ENCODE measurements at regions of chr6 and their contacts with region 1.

Region 1: DNA sequence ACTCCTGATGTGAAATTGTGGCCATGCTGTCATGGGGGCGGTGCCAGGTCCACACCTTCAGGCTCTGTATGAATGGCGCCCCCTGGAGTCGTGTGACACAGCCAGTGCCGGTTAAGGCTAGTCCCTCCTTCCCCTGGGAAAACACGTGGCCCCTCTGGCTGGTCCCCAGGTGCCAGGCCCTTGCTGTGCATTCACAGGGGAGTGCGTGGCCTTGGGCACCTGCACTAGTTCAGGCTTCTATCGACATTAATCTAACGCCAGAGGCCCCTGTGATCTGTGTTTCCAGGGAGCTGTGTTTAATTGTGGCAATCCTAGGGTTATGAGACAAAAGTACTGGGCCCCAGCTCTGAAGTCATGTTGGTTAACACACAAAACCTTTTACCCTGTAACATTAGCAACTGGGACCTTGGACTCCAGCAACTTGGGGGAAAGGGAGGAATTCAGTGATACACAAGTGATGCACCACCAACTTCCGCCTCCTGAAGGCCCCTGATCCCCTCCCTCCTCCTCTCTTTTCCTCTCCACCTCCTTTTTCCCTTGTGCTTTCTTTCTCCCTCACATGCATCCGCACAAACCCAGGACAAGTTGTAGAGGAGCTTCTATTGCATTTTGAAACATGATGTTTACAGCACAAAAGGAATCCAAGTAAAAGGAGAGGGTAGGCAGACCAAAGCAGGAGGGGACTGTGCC is 74.0 kb downstream of the SSR1 start:
- DNase-seq: peak; percentile 83 to 94 (median 91)
- ATAC-seq: peak; percentile 79 to 89 (median 88)
- H3K4me3 ChIP-seq: no peak overlapping the region
- H3K27ac ChIP-seq: peak overlapping the region in 6 of 12 donors; percentile 10 to 59 (median 46)
- H3K4me1 ChIP-seq: peaks cover 0 to 53% (median 29%) of the 10 kb centered on the region in 12 donors
- H3K27me3 ChIP-seq: no peaks in the 10 kb centered on the region
- CTCF ChIP-seq: peak in 11 of 12 donors; percentile 50 to 77 (median 70)
- POLR2A ChIP-seq: no peak

Region 2: GRCh38 chr6:6676910-6677441 is 562.1 kb before region 1 on chr6:
- intact Hi-C with region 1: loop called in 9 of 10 experiments (anchors 2 to 5 kb)
- DNase-seq: peak in 4 of 5 donors; percentile 63 to 75 (median 72)
- ATAC-seq: peak; percentile 73 to 87 (median 86)
- H3K4me3 ChIP-seq: no peak overlapping the region
- H3K27ac ChIP-seq: peak overlapping the region in 11 of 12 donors; percentile 15 to 77 (median 58)
- H3K4me1 ChIP-seq: peaks cover 0 to 45% (median 11%) of the 10 kb centered on the region in 12 donors
- H3K27me3 ChIP-seq: no peaks in the 10 kb centered on the region
- CTCF ChIP-seq: peak; percentile 95 to 99 (median 98)
- POLR2A ChIP-seq: no peak

Region 3: GRCh38 chr6:6890400-6890858 is 348.6 kb before region 1 on chr6:
- intact Hi-C with region 1: loop called in 1 of 10 experiments (anchors 10 kb)
- DNase-seq: peak; percentile 38 to 76 (median 63)
- ATAC-seq: peak in 3 of 4 donors; percentile 46 to 56 (median 55)
- H3K4me3 ChIP-seq: peak overlapping the region in 1 of 12 donors; percentile 23
- H3K27ac ChIP-seq: peak overlapping the region in 9 of 12 donors; percentile 34 to 87 (median 74)
- H3K4me1 ChIP-seq: peaks cover 0 to 43% (median 19%) of the 10 kb centered on the region in 12 donors
- H3K27me3 ChIP-seq: no peaks in the 10 kb centered on the region
- CTCF ChIP-seq: no peak
- POLR2A ChIP-seq: no peak

Region 4: DNA sequence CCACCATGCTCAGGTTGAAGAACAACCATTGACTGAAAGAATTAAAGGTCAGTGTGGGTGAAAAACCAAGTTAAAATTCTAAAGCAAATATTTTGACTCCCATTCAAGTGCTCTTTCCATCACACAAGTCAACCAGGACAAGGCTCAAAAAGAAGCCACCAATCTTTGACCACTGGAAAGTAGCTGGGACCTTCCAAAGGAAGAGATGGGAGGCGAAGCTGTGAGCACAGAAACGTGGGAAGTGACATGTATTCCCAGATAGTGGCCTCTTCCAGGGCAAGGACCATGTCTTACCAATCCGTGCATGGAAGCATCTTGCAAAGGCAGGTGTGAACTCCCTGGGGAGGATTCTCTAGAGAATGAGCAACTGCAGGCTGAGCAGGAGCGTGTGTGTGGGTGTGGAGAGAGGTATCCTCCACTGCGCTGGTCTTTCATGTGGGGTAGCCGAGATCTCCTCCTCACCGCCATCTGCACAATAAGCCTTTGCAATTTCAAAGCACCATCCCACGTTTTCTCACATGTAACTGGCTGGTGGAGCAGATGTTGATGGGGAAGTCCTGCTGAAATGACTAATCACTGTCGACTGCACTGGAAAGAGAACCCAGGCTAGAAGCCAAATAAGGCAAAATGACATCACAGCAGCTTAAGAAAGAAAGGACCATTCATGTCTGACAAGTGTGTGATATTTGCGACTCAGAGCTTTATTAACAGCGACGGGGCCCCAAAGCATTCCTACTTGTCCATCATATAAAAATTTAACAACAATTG is 320.6 kb before region 1 on chr6:
- intact Hi-C with region 1: loop called in 3 of 10 experiments (anchors 10 kb)
- DNase-seq: no peak
- ATAC-seq: peak in 3 of 4 donors; percentile 21 to 45 (median 21)
- H3K4me3 ChIP-seq: no peak overlapping the region
- H3K27ac ChIP-seq: no peak overlapping the region
- H3K4me1 ChIP-seq: peaks cover 0 to 30% (median 15%) of the 10 kb centered on the region in 12 donors
- H3K27me3 ChIP-seq: no peaks in the 10 kb centered on the region
- CTCF ChIP-seq: no peak
- POLR2A ChIP-seq: no peak

Region 5: DNA sequence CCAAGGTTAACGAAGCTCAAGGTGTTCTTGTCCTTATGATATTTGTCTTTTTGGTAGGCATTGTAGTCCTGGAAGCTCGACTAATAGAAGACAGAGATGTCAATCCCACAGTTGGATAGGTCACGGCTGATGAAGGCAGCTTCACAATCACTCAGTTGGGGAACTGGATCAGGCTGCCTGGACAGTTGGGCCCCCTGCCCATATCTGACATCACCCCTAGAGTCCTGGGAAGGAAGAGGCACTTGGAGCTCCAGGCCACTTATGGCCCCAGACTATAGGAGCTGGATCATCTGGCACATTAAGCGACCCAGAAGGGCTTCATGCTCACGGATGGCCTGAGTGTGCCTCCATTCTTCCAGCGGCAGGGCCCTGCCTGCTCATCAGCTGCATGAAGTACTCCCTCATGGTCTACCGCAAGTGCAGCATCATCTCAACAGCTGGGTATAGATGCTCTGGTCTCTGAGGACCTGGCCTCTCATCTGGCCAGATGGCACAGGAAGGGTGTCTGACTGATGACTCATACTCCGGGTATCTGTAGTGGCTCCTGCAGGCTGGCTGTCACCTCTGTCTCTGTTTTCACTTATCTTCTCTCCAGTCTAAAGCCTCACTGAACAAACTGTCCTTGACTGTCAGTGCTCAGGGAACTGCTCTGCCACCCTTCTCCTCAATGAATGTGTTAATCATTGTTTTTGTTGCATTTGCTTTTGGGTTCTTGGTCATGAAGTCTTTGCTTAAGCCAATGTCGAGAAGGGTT is 103.1 kb after region 1 on chr6:
- intact Hi-C with region 1: no loop called
- DNase-seq: peak in 2 of 5 donors; percentile 40 to 43
- ATAC-seq: peak; percentile 83 to 90 (median 84)
- H3K4me3 ChIP-seq: no peak overlapping the region
- H3K27ac ChIP-seq: no peak overlapping the region
- H3K4me1 ChIP-seq: peaks cover 0 to 8% (median 0%) of the 10 kb centered on the region in 12 donors
- H3K27me3 ChIP-seq: peaks cover 0 to 7% (median 0%) of the 10 kb centered on the region in 9 donors
- CTCF ChIP-seq: no peak
- POLR2A ChIP-seq: no peak